Aorta (tissue), 5 donors: ENCODE measurements at regions of chr6 and their contacts with region 1.

Region 1: DNA sequence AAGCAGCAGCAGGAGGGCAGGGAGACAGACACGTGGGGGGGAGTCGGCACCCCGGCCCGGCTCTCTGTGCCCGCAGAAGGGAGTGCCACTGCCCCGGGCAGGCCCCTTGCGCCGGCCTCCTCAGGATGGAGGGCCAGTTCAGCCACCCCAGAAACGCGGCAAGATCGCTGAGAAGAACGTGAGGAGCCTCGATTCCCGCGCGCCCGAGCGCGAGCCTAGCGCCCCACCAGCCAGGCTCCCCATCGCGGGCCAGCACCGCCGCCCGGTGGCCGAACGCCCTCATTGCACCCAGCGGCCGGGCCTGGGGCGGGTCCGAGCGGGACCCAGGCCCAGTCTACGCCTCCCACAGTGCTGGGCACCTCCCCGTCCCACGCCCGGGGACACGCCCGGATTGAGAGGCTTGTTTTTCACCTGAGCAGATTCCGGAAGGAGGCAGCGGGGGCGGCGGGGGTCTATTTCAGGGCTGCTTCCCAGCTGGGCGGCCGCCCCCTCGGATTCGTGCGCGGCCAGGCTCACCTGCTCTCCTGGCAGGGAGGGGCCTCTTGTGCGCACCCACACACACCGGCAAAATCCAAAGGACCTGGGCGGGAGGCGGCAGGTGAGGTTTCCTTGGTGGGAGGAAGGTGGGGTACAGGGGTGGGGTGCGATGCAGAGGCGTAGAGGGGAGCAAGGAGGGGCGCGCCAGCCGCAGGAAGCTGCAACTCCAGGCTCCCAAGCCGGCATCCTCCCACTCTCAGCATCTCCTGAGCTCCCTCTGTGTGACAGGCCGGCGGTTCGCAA is 9.0 kb upstream of the GRM4 start:
- DNase-seq: peak in 1 of 2 donors; percentile 87
- ATAC-seq: peak; percentile 84
- H3K4me3 ChIP-seq: no peak overlapping the region
- H3K27ac ChIP-seq: no peak overlapping the region
- H3K4me1 ChIP-seq: no peaks in the 10 kb centered on the region
- H3K27me3 ChIP-seq: peaks cover 0 to 3% of the 10 kb centered on the region in 2 donors

Region 2: DNA sequence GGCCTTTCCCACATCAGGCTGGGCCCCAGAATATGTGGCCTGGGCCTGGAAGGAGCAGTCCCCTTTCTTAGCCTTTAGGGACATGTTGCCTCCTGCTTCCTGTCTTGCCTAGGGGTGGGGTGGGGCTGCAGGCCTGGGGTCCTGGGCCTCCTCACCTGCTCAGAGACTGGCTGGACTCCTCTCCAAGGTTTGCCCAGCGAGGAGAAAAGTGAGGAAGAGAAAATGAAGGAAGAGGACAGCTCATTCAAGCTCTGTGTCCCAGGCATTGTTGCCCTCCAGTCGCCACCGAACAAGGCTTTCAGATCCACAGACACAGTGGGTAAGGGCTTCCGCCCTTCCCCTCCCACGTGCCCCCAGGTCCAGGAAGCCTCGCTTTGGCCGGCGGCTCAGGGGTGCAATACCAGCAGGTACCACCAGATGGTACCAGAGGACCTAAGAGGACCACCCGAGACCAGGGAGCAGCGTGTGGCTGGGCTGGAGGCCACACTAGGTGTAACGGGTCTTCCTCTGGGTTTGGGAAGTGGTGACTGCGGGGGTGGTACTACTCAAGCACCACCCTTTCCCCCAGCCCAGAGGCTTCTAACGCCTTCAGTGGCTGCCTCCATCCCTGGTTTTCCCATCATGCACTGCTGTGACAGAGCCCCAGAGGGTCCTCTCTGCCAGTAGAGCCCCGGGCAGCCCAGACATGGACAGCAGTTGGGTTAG is 569.3 kb before region 1 on chr6:
- intact Hi-C with region 1: loop called in 1 of 2 experiments (anchors 5 kb)
- DNase-seq: peak; percentile 85 to 94
- ATAC-seq: peak; percentile 83
- H3K4me3 ChIP-seq: no peak overlapping the region
- H3K27ac ChIP-seq: no peak overlapping the region
- H3K4me1 ChIP-seq: no peaks in the 10 kb centered on the region
- H3K27me3 ChIP-seq: no peaks in the 10 kb centered on the region

Region 3: GRCh38 chr6:33607784-33608161 is 547.1 kb before region 1 on chr6:
- intact Hi-C with region 1: loop called in 1 of 2 experiments (anchors 10 kb)
- DNase-seq: no peak
- ATAC-seq: no peak
- H3K4me3 ChIP-seq: no peak overlapping the region
- H3K27ac ChIP-seq: no peak overlapping the region
- H3K4me1 ChIP-seq: no peaks in the 10 kb centered on the region
- H3K27me3 ChIP-seq: no peaks in the 10 kb centered on the region

Region 4: DNA sequence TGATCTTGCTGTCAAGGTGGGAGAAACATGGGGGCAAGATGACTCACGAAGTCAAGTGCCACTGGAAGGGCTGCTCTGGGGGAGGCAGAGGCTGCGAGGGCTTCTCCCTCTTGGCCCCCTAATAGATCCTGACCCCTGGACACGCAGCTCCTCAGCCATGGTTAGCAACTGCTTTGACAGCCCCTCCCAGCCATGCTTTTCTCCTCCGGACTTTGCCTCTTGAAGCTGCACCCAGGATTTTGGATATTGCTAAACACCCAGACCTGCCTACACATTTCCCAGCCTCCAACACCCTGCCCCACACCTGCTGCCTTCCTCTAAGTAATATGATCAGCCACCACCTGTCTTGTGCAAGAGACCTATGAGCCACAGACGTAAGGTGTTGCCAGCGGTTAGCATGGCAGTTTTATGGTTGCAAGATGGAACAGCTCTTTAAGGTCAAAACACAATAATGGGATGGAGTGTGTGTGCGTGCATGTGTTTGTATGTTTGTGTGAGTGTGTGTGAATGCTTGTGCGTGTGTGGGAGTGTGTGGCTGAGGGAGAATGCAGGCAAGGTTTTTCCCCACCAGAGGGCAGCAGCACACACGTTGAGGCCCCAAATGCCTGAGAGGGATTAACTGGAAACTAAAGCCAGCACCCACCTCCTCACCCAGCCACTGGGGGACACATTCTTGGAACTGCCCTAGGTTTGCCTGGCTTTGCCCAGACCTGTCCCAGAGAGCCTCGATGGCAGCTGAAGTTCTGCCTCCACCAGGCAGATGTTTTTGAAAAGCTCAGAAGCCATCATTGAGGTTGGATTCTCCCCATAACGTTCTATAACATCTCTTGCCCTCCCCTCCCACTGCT is 410.6 kb before region 1 on chr6:
- intact Hi-C with region 1: loop called in 1 of 2 experiments (anchors 5 kb)
- DNase-seq: peak; percentile 70 to 90
- ATAC-seq: peak; percentile 74
- H3K4me3 ChIP-seq: no peak overlapping the region
- H3K27ac ChIP-seq: no peak overlapping the region
- H3K4me1 ChIP-seq: no peaks in the 10 kb centered on the region
- H3K27me3 ChIP-seq: no peaks in the 10 kb centered on the region

Region 5: GRCh38 chr6:33771146-33772081 is 383.4 kb before region 1 on chr6:
- intact Hi-C with region 1: loop called in 1 of 2 experiments (anchors 5 kb)
- DNase-seq: peak; percentile 80 to 91
- ATAC-seq: peak; percentile 93
- H3K4me3 ChIP-seq: no peak overlapping the region
- H3K27ac ChIP-seq: peak overlapping the region; percentile 20 to 66
- H3K4me1 ChIP-seq: no peaks in the 10 kb centered on the region
- H3K27me3 ChIP-seq: no peaks in the 10 kb centered on the region